Spleen (tissue), 13 donors: ENCODE measurements at regions of chr16 and their contacts with region 1.

Region 1: GRCh38 chr16:2874912-2875362 is 8.1 kb upstream of the FLYWCH2 start:
- DNase-seq: peak; percentile 95
- H3K4me3 ChIP-seq: no peak overlapping the region
- H3K27ac ChIP-seq: peak overlapping the region in 4 of 8 donors; percentile 15 to 50 (median 26)
- H3K4me1 ChIP-seq: peaks cover 0 to 28% (median 13%) of the 10 kb centered on the region in 6 donors
- H3K27me3 ChIP-seq: peaks cover 0 to 5% (median 0%) of the 10 kb centered on the region in 7 donors
- CTCF ChIP-seq: peak; percentile 92 to 99 (median 96)
- POLR2A ChIP-seq: no peak

Region 2: DNA sequence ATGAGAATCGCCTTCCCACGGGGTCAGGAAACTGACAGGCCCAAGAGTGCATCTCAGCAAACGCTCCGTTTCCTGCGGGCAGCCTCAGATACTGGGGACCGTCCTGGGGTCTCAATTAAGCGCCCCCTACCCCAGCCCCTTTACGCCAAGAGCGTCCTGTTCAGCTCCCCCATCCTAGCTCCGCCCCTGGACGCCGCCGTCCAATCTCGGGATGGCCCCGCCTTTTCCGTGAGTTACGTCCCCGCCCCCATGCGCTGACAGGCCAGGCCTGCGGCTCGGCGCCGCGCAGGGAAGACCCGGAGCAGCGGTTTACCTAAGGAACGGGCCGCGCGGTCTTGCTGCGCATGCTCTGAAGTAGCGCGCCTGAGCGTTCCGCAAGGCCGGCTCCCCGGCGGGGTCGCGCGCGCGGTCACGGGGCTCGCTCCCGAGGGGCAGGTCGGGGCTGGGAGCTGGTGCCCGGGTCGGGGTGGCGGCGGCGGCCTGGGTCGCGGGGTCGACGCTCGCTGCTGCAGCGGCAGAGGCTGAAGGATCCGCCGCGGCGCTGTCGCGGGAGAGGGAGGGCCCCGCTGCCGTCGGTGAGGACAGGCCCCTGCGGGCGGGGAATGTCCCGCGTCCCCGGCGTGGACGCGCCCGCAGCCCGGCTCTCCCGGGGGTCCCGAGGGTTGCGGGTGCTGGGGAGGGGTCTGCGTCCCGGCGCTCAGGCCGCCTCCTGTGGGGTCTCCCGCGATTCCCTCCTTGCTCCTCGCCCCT is 36.8 kb after region 1 on chr16 and contains the start of gene FLYWCH1:
- intact Hi-C with region 1: loop called (anchors 5 kb)
- DNase-seq: peak; percentile 100
- H3K4me3 ChIP-seq: peak within 1 kb of the TSS; percentile 54 to 88 (median 74)
- H3K27ac ChIP-seq: peak within 1 kb of the TSS; percentile 61 to 92 (median 89)
- H3K4me1 ChIP-seq: peaks cover 6 to 54% (median 25%) of the 10 kb centered on the region in 6 donors
- H3K27me3 ChIP-seq: no peaks in the 10 kb centered on the region
- CTCF ChIP-seq: peak in 4 of 11 experiments; percentile 9 to 35 (median 24)
- POLR2A ChIP-seq: peak in 2 of 3 donors; percentile 45 to 56
- total RNA-seq, gene FLYWCH1: 34.8 to 79.3 (median 57.0) TPM

Region 3: DNA sequence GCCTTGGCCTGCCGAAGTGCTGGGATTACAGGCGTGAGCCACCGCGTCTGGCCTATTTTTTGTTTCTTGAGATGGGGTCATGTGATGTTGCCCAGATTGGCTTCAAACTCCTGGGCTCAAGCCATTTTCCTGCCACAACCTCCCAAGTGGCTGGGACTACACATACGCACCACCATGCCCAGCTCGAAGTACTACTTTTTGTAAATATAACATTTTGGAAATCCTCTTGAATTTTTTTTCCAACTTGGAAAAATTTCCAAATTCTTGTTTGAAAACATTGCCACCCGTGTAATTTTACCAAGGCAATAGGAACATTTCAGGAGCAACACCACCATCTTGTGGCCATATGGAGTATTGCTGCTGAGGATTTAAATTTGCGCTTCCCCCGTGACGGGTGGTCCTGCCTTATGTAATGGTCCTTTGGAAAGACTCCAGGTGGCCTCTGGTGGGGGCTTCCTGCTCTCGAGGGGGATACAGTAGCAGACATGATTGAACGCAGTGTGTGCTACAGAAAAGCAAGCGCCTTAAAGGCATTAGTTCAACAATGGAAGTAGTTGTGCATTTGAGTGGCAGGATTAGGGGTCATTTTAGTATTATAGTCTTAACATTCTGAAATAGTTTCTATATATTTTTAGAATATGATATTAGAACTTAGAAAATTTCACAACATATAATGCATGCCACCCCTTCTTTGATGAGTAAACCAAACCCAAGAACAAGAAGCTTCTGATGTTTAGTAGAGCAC is 44.7 kb after region 1 on chr16:
- intact Hi-C with region 1: loop called (anchors 5 kb)
- DNase-seq: no peak
- H3K4me3 ChIP-seq: no peak overlapping the region
- H3K27ac ChIP-seq: peak overlapping the region in 5 of 8 donors; percentile 2 to 54 (median 39)
- H3K4me1 ChIP-seq: peaks cover 0 to 23% (median 8%) of the 10 kb centered on the region in 6 donors
- H3K27me3 ChIP-seq: no peaks in the 10 kb centered on the region
- CTCF ChIP-seq: peak; percentile 70 to 97 (median 92)
- POLR2A ChIP-seq: no peak